ENCODE measurements at regions of chr4 and their contacts with region 1.

Region 1: DNA sequence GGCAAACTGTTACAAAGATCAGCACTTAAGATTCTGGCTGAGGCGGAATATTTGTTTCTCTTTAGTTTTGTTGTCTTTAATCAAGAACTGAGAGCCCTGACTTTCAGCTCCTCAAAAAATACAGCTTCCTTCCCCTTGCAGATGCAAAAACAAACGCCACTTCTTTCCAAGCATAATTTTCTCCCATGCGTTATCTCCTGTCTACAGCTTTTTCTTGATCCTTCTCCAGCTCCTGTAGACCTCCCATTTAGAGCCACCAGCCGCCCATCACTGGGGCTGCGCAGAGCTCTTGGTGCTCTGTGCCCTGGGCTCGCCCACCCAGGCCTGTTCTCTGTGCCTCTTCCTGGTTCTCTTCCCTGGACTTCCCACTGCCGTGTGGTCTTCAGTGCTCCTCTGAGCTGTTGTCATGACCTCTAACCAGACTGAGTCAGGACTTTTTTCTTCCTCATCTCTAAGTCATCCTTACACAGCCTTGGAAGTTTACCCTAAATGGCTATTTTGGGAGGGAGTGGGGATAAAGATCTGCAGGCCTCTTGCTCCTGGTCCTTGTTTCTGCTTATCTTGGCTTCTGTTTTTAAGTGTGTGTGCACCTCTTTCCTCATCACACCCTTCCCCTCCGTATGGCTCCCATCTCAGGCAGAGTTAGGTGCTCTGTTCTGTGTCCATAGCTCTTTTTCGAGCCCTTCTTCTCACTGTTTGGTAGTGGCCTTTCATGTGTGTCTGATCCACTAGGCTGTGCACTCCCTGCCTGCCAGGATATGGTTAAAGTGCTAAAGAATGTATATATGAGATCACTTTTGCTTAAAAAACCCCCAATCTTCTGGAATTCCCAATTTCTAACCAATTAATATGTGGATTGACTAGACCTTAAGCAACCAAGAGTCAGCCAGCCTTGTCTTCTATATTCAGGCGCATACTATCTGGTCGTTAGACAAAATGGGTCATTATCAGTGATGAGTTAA is 122.5 kb downstream of the PTTG2 start:
- DNase-seq: no peak
- H3K4me3 Mint-ChIP-seq: no peak overlapping the region
- H3K27ac Mint-ChIP-seq: peak overlapping the region; percentile 69
- H3K4me1 Mint-ChIP-seq: peaks cover 16% of the 10 kb centered on the region
- H3K27me3 Mint-ChIP-seq: no peaks in the 10 kb centered on the region

Region 2: DNA sequence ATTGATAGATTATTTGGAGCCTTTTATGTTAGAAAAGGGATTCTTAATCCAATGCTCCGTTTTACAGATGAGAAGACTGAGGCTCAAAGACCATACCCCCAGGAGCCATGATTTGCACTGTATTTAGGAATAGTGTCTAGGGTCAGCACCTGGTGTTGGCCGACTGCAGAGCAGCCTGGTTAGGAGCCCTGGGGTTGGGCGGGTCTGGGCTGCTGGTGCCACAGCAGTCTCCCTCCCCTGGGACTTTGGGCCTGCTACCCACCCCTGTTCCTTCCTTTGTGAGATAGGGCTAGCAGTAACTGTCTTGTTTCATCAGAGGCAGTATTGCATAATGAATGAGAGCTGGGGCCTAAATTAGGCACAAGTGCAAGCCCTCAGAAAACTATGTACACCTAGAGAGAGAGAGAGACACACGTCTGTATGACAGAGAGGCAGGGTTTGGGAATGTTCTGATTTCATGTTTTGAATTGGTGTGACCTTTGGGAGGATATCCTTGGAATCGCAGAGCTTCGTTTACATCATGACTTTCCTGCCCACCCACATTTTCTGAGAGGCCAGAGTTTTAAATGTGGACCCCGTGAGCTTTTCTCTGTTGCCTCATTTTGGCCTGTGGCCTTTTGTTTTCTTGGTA is 10.8 kb before region 1 on chr4:
- CTCF ChIA-PET with region 1: interaction called, 11 read pairs
- POLR2A ChIA-PET with region 1: no interaction called
- DNase-seq: no peak
- H3K4me3 Mint-ChIP-seq: no peak overlapping the region
- H3K27ac Mint-ChIP-seq: no peak overlapping the region
- H3K4me1 Mint-ChIP-seq: peaks cover 46% of the 10 kb centered on the region
- H3K27me3 Mint-ChIP-seq: no peaks in the 10 kb centered on the region

Measured in activated CD4-positive, alpha-beta T cell treated with anti-CD3 and anti-CD28 coated beads, Interleukin-2, amount 10 ng/mL, durations not matched to agents 7 days and 5 days (primary cell).